Transverse colon (tissue), 4 donors: ENCODE measurements at regions of chr13 and their contacts with region 1.

Region 1: DNA sequence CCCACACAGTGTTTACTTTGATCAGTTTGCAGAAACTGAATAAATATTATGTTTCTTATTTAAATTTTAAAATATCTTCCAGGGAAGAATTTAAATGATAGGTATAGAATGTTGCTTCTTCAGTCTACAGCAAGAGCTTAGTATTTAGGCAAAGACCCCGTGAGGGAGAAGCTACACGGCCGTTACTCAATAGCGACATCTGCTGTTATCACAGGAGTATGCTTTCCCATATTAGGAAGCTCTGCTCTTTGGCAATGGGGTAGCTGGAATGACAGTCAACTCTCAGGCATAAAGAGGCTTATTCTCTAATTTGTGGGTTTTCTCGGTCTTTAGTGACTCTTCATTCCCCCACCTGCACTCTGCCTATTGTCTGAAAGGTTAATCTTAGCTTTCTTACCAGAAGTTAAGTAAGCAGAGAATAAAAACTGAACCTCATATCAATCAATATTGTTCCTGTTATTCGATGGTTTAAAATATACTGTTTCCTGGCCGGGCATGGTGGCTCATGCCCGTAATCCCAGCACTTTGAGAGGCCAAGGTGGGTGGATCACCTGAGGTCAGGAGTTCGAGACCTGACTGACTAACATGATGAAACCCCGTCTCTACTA is 13.2 kb upstream of the LHFPL6 start:
- DNase-seq: peak; percentile 31
- H3K4me3 ChIP-seq: no peak overlapping the region
- H3K27ac ChIP-seq: no peak overlapping the region
- H3K4me1 ChIP-seq: no peaks in the 10 kb centered on the region
- H3K27me3 ChIP-seq: no peaks in the 10 kb centered on the region
- CTCF ChIP-seq: peak; percentile 59 to 84 (median 78)
- EP300 ChIP-seq: no peak
- POLR2A ChIP-seq: no peak

Region 2: DNA sequence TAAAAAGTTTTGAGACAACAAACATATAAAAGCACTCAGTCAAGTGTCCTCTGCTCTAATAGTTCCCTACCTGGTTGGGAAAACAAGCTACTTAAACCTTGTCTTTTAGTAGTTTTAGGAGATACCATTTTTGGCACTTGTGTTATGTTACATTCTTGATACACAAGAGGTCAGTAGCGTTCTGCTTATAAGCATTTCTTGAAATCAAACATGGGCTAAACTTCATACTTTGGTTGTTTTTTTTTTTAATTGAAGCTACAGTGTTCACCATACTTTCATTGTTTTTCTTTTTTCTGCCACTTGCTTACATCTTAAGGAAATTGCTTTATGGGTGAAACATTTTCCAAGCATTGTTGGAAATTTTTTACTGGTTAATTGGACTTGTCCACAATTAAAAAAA is 565.0 kb before region 1 on chr13:
- in situ Hi-C with region 1: loop called in 2 of 4 experiments (anchors 10 to 25 kb)
- intact Hi-C with region 1: loop called (anchors 10 kb)
- DNase-seq: no peak
- H3K4me3 ChIP-seq: no peak overlapping the region
- H3K27ac ChIP-seq: no peak overlapping the region
- H3K4me1 ChIP-seq: no peaks in the 10 kb centered on the region
- H3K27me3 ChIP-seq: no peaks in the 10 kb centered on the region
- CTCF ChIP-seq: peak in 2 of 5 experiments; percentile 15 to 18
- EP300 ChIP-seq: no peak
- POLR2A ChIP-seq: no peak

Region 3: DNA sequence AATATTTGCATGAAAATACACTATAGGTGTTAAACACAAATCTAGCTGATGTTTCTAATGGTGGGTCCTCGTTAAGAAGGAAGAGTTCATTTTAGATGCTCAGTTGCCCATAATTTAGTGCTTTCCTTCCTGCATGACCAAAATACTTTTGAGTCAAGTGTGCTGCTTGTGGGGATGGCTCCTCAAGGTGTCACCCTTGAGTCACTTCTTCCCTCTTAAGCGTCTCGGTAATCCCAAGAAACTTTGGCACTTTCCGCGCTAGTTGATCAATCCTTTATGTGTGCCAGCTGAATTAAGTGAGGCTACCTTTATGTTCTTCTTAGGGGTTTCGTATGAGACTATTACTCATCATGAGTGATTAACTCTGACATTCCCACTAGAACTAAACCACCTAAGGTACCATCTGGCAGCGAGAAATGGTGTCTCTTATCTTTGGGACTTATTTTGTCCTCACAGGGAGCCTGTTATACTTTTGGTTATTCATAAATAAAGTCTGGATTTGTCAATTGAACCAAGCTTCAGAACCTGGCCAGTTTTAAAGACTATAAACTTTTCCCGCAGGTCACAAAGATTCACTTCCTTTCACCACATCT is 471.2 kb before region 1 on chr13:
- in situ Hi-C with region 1: loop called (anchors 10 kb)
- intact Hi-C with region 1: loop called (anchors 5 kb)
- DNase-seq: peak; percentile 33
- H3K4me3 ChIP-seq: no peak overlapping the region
- H3K27ac ChIP-seq: no peak overlapping the region
- H3K4me1 ChIP-seq: no peaks in the 10 kb centered on the region
- H3K27me3 ChIP-seq: peaks cover 8% of the 10 kb centered on the region
- CTCF ChIP-seq: peak; percentile 51 to 62 (median 56)
- EP300 ChIP-seq: no peak
- POLR2A ChIP-seq: no peak

Region 4: DNA sequence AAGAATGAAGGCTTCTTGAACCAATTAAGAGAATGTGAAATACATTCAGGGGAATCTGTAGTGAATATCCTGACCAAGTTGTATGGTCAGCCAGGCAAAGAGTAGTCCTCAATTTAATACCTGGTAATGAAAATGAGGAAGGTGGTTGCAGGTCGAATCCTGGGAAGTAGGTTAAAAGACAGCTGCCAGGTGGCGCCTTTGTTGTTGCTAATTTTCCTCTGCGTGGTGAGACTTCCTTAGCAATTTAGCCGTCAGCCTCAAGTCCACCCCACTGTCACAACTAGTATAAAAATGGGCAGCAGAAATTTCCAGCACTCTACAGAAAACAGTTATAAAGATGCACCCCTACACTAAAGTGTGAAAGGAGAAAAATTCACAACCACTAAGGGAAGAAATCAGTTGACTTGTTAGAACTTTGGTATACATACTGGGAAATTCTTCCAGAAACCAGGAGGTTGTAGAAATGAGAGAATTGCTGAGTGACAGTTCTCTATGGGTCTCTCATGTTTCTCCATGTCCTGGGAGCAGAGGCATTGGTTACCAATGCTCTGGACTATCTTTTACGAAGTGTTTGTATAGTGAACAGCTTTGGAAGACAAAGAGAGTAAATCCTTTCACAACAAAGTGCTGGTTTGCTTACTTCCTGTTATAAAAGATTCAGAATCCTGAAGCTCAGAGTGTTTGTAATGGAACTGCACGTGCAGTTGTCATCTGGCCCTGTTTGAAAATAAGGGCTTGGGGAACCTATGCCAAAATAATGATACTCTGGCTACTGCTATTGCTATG is 342.0 kb before region 1 on chr13:
- in situ Hi-C with region 1: loop called in 3 of 4 experiments (anchors 10 to 25 kb)
- intact Hi-C with region 1: no loop called
- DNase-seq: peak; percentile 17
- H3K4me3 ChIP-seq: no peak overlapping the region
- H3K27ac ChIP-seq: no peak overlapping the region
- H3K4me1 ChIP-seq: peaks cover 0 to 7% (median 2%) of the 10 kb centered on the region in 4 donors
- H3K27me3 ChIP-seq: no peaks in the 10 kb centered on the region
- CTCF ChIP-seq: peak in 4 of 5 experiments; percentile 8 to 29 (median 24)
- EP300 ChIP-seq: no peak
- POLR2A ChIP-seq: no peak

Region 5: GRCh38 chr13:39415008-39415802 is 201.0 kb before region 1 on chr13:
- in situ Hi-C with region 1: no loop called
- intact Hi-C with region 1: loop called (anchors 10 kb)
- DNase-seq: no peak
- H3K4me3 ChIP-seq: no peak overlapping the region
- H3K27ac ChIP-seq: peak overlapping the region in 3 of 4 donors; percentile 26 to 42 (median 29)
- H3K4me1 ChIP-seq: peaks cover 0 to 12% (median 2%) of the 10 kb centered on the region in 4 donors
- H3K27me3 ChIP-seq: no peaks in the 10 kb centered on the region
- CTCF ChIP-seq: peak in 3 of 5 experiments; percentile 23 to 29 (median 27)
- EP300 ChIP-seq: peak; percentile 23
- POLR2A ChIP-seq: no peak

Region 6: DNA sequence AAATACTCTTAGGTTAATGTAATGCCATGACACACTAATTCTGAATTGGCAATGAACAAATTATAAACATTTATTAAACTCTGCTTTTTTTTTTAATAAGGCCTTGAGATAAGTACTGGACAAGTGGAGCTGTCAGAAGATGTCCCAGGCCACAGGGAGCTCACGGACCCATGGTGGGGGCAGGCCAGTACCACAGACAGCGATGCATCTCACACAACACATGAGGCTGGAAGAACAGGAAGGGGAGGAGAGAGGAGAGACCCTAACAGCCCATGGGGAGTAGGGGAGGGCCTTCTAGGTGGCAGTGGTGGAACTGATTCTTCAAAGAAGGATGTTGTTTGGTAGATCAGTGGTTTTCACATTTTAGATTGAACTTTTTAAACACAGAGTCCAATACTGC is 141.6 kb before region 1 on chr13:
- in situ Hi-C with region 1: no loop called
- intact Hi-C with region 1: no loop called
- DNase-seq: no peak
- H3K4me3 ChIP-seq: no peak overlapping the region
- H3K27ac ChIP-seq: no peak overlapping the region
- H3K4me1 ChIP-seq: no peaks in the 10 kb centered on the region
- H3K27me3 ChIP-seq: no peaks in the 10 kb centered on the region
- CTCF ChIP-seq: no peak
- EP300 ChIP-seq: no peak
- POLR2A ChIP-seq: no peak